Sigmoid colon (tissue), 7 donors: ENCODE measurements at regions of chr15 and their contacts with region 1.

Region 1: GRCh38 chr15:89177633-89178306 is 43.6 kb downstream of the RLBP1 start:
- DNase-seq: peak; percentile 78
- H3K4me3 ChIP-seq: no peak overlapping the region
- H3K27ac ChIP-seq: peak overlapping the region in 1 of 4 donors; percentile 20
- H3K4me1 ChIP-seq: peaks cover 0 to 9% (median 7%) of the 10 kb centered on the region in 4 donors
- H3K27me3 ChIP-seq: no peaks in the 10 kb centered on the region
- CTCF ChIP-seq: peak; percentile 49 to 83 (median 76)
- EP300 ChIP-seq: no peak
- POLR2A ChIP-seq: no peak

Region 2: GRCh38 chr15:89057504-89058133 is 120.2 kb before region 1 on chr15:
- intact Hi-C with region 1: loop called (anchors 1 kb)
- DNase-seq: peak; percentile 91
- H3K4me3 ChIP-seq: no peak overlapping the region
- H3K27ac ChIP-seq: no peak overlapping the region
- H3K4me1 ChIP-seq: peaks cover 0 to 8% (median 4%) of the 10 kb centered on the region in 4 donors
- H3K27me3 ChIP-seq: no peaks in the 10 kb centered on the region
- CTCF ChIP-seq: peak; percentile 94 to 99 (median 97)
- EP300 ChIP-seq: no peak
- POLR2A ChIP-seq: no peak

Region 3: DNA sequence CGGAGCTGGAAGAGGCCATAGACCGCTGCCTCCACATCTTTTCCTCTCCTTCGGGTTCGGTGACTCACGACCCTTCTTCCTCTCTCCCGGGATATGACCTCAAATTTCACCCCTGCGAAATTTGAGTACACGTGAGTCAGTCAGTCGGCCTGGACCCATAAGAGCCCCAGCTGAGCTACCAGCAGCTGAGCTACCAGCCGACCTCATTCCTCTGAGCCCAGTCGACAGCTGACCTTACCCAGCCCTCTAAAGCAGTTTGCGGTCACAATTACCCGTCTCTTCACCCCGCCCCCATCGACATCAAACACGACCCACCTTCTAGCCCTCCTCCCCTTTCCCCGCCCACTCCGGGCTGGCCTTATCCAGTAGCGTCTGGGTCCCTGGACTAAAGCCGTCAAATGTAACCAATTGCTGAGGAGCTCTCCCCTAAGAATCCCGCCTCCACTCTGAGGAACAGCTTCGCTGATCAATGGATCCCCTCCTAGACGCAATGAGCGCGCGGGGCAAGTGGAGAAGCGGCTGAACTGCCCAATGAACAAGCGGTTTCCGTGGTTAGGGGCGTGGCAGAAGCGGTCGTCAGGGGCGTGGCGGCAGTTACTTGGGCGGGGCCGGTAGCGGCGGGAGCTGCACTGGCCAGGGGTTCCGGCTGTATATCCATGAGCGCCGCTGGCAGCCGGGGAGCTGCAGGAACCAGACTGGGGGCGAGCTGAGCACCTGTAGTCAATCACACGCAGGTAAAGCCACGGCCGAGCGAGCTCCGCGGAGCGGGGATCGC is 89.8 kb before region 1 on chr15 and contains the start of gene ABHD2:
- intact Hi-C with region 1: no loop called
- DNase-seq: peak; percentile 100
- H3K4me3 ChIP-seq: peak within 1 kb of the TSS; percentile 72 to 97 (median 88)
- H3K27ac ChIP-seq: peak within 1 kb of the TSS; percentile 94 to 98 (median 96)
- H3K4me1 ChIP-seq: peaks cover 0 to 75% (median 67%) of the 10 kb centered on the region in 4 donors
- H3K27me3 ChIP-seq: no peaks in the 10 kb centered on the region
- CTCF ChIP-seq: no peak
- EP300 ChIP-seq: peak in 2 of 4 donors; percentile 2 to 33
- POLR2A ChIP-seq: peak; percentile 87 to 95
- total RNA-seq, gene ABHD2: 32.9 to 81.5 (median 49.0) TPM

Region 4: GRCh38 chr15:89112341-89112971 is 65.3 kb before region 1 on chr15:
- intact Hi-C with region 1: no loop called
- DNase-seq: peak; percentile 65
- H3K4me3 ChIP-seq: no peak overlapping the region
- H3K27ac ChIP-seq: peak overlapping the region; percentile 53 to 90 (median 70)
- H3K4me1 ChIP-seq: peaks cover 0 to 72% (median 55%) of the 10 kb centered on the region in 4 donors
- H3K27me3 ChIP-seq: no peaks in the 10 kb centered on the region
- CTCF ChIP-seq: no peak
- EP300 ChIP-seq: no peak
- POLR2A ChIP-seq: no peak